ENCODE measurements at regions of chr6 and their contacts with region 1.

Region 1: DNA sequence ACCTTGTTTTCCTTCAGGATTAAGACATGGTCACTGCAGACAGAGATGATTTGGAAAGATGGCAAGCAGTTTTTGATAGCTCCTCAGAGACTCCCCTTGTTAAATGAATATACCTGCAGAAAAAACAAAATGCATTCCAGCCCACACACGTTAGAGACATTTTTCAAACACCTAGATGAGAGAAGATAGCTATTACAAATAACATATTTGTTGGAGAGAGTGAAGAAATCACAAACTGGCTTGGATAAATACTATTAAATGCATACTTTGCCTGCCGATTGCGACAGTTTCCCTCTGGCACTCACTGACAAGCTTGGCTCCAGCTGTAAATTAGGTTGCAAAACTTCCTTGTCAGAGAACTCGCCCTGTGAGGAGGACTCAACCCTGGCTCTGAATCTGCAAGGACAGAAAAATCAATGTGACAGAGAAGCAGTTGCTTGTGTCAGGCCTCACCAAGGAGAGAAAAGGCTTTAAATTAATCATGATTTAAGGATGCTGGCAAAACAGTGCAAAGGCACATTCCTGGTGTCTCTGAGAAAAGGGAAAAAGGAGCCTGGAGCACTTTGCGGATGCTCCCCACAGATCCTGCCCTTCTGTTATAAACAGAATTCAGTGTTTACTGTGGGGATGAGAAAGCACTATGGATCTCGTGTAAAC is 423.7 kb upstream of the MARCKS start:
- DNase-seq: peak; percentile 83
- ATAC-seq: peak; percentile 75
- H3K4me3 ChIP-seq: no peak overlapping the region
- H3K27ac ChIP-seq: peak overlapping the region; percentile 56; the same call in 1 of the 2 replicates
- H3K4me1 ChIP-seq: peaks cover 8% of the 10 kb centered on the region
- H3K27me3 ChIP-seq: no peaks in the 10 kb centered on the region
- CTCF ChIP-seq: no peak
- POLR2A ChIP-seq: no peak
- RAD21 ChIP-seq: no peak

Region 2: DNA sequence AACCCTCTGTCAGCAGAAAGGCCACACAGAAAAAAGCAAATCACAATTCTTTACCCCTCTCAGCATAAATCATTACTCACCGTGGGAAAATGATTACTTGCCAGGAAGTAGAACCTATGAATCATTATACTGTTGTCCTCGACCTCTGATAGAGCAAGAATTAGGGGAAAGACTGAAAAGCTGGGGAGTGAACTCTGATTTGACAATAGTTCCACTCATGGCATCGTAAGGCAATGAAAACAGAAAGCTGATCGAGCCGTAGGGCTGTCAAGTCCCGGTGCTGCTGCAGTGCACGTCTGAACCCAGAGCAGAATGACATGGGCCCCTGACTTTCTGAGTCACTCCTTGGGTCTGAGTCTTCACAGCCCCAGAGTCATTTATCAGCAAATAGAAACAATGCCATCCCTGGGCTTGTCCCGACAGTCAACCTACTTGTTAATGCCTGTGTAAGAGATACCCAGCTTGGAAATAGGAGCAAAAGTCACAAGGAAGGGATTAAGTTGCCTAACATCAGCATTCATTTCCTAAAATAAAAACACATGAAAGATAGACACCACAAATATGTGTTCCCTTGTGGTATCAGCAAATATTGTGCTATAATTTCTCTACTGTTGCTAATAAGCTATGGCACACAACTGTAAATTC is 198.9 kb after region 1 on chr6:
- CTCF ChIA-PET with region 1: no interaction called
- POLR2A ChIA-PET with region 1: no interaction called
- dilution Hi-C with region 1: no loop called
- in situ Hi-C with region 1: no loop called
- intact Hi-C with region 1: loop called (anchors 5 kb)
- DNase-seq: peak; percentile 88
- ATAC-seq: peak; percentile 62
- H3K4me3 ChIP-seq: peak overlapping the region; percentile 32; the same call in 1 of the 2 replicates
- H3K27ac ChIP-seq: peak overlapping the region; percentile 63
- H3K4me1 ChIP-seq: peaks cover 25% of the 10 kb centered on the region
- H3K27me3 ChIP-seq: no peaks in the 10 kb centered on the region
- CTCF ChIP-seq: no peak
- POLR2A ChIP-seq: peak; percentile 50; the same call in 1 of the 2 replicates
- RAD21 ChIP-seq: 0 out of 2 replicates have a peak, but pooled peaks have one; percentile 11

Region 3: GRCh38 chr6:113674075-113674474 is 240.6 kb after region 1 on chr6:
- CTCF ChIA-PET with region 1: no interaction called
- POLR2A ChIA-PET with region 1: no interaction called
- dilution Hi-C with region 1: no loop called
- in situ Hi-C with region 1: no loop called
- intact Hi-C with region 1: no loop called
- DNase-seq: no peak
- ATAC-seq: no peak
- H3K4me3 ChIP-seq: no peak overlapping the region
- H3K27ac ChIP-seq: no peak overlapping the region
- H3K4me1 ChIP-seq: peaks cover 3% of the 10 kb centered on the region
- H3K27me3 ChIP-seq: peaks cover 2% of the 10 kb centered on the region; the same call in 1 of the 2 replicates
- CTCF ChIP-seq: no peak
- POLR2A ChIP-seq: no peak
- RAD21 ChIP-seq: no peak

Measured in IMR-90 (cell line).